GM23248 (cell line): ENCODE measurements at regions of chr21 and their contacts with region 1.

Region 1: DNA sequence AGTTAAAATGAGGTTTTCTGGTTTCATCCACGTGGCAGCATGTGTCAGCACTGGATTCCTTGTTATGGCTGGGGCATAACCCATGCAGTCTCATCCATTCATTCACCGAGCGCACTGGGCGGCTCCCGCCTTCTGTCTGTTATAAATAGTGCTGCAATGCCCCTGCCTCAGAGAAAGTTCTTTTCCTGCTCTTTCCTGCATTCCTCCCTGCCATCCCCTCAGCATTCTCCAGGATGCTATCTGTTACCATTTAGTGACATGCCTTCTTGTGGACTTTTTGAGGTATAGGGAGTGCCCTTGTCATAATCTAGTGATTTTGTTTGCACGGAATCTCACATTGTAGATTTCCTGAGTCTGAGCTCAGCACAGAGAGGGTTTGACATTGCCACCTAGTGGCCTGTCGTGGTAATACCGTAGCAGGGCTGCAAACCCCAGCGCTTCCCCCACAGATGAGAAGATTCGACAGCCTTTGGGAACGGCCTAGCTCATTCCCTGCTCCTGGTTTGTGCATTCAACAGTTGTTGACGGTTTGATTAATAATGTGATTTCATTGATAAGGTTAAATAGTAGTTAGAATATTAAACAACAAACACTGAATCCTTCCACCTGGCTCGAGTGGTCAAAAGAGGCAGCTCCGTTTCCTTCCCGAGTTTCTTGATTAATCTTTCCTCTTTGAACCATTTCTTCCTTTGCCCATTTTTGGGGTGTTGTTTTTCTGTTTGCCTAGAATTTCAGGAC is 46.3 kb downstream of the UMODL1 start:
- DNase-seq: peak; percentile 88
- H3K4me3 ChIP-seq: peak overlapping the region; percentile 62
- H3K27ac ChIP-seq: peak overlapping the region; percentile 72
- H3K4me1 ChIP-seq: peaks cover 15% of the 10 kb centered on the region
- H3K27me3 ChIP-seq: no peaks in the 10 kb centered on the region; the same call in 1 of the 2 replicates

Region 2: GRCh38 chr21:41501882-41502281 is 615.5 kb before region 1 on chr21:
- in situ Hi-C with region 1: no loop called
- DNase-seq: peak; percentile 21
- H3K4me3 ChIP-seq: no peak overlapping the region
- H3K27ac ChIP-seq: no peak overlapping the region
- H3K4me1 ChIP-seq: no peaks in the 10 kb centered on the region
- H3K27me3 ChIP-seq: peaks cover 45% of the 10 kb centered on the region

Region 3: GRCh38 chr21:41828481-41829360 is 288.7 kb before region 1 on chr21:
- in situ Hi-C with region 1: loop called (anchors 10 kb)
- DNase-seq: peak; percentile 18
- H3K4me3 ChIP-seq: no peak overlapping the region
- H3K27ac ChIP-seq: no peak overlapping the region
- H3K4me1 ChIP-seq: no peaks in the 10 kb centered on the region
- H3K27me3 ChIP-seq: no peaks in the 10 kb centered on the region

Region 4: GRCh38 chr21:41957991-41958766 is 159.2 kb before region 1 on chr21:
- in situ Hi-C with region 1: no loop called
- DNase-seq: peak; percentile 81
- H3K4me3 ChIP-seq: no peak overlapping the region
- H3K27ac ChIP-seq: peak overlapping the region; percentile 82
- H3K4me1 ChIP-seq: peaks cover 22% of the 10 kb centered on the region
- H3K27me3 ChIP-seq: no peaks in the 10 kb centered on the region